PC-9 (cell line): ENCODE measurements at regions of chr1 and their contacts with region 1.

Region 1: DNA sequence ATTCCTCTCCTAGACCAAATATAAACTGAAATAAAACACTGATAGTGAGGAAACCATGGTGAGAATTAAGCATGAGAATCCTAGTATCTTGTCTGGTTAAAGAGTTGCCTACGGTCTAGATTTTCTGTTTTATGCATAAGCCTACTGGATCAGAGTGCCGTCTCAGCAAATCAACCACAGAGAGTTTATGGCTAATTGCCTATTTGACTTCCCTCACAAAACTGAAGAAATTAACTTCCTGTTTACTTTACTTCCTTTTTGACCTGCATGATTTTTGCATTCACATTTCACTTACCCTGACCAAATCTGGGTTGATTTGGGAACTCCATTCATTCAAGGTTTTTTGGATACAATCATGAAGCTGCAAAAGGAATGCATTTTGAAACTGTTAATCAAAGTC is 5.0 kb downstream of the GCLM start:
- DNase-seq: peak in 1 of 2 experiments; percentile 28
- H3K4me3 ChIP-seq: peak overlapping the region; percentile 68; the same call in 1 of the 2 replicates
- H3K27ac ChIP-seq: peak overlapping the region; percentile 80
- H3K4me1 ChIP-seq: peaks cover 37% of the 10 kb centered on the region
- H3K27me3 ChIP-seq: no peaks in the 10 kb centered on the region
- CTCF ChIP-seq: no peak

Region 2: GRCh38 chr1:94463765-94464330 is 559.6 kb after region 1 on chr1:
- CTCF ChIA-PET with region 1: no interaction called
- POLR2A ChIA-PET with region 1: no interaction called
- intact Hi-C with region 1: loop called (anchors 5 kb)
- DNase-seq: peak; percentile 29 to 67
- H3K4me3 ChIP-seq: no peak overlapping the region
- H3K27ac ChIP-seq: peak overlapping the region; percentile 11; the same call in 1 of the 2 replicates
- H3K4me1 ChIP-seq: peaks cover 5% of the 10 kb centered on the region
- H3K27me3 ChIP-seq: no peaks in the 10 kb centered on the region
- CTCF ChIP-seq: peak; percentile 86